Natural killer cell (primary cell): ENCODE measurements at regions of chr10 and their contacts with region 1.

Region 1: GRCh38 chr10:119199231-119199992 is 8.0 kb upstream of the GRK5 start:
- DNase-seq: peak in 1 of 2 donors; percentile 76
- ATAC-seq: peak; percentile 57 to 85 (median 57)
- H3K4me3 ChIP-seq: no peak overlapping the region
- H3K4me3 Mint-ChIP-seq: no peak overlapping the region
- H3K27ac ChIP-seq: no peak overlapping the region
- H3K27ac Mint-ChIP-seq: peak overlapping the region in 1 of 2 donors; percentile 29
- H3K4me1 ChIP-seq: no peaks in the 10 kb centered on the region
- H3K4me1 Mint-ChIP-seq: peaks cover 16 to 20% of the 10 kb centered on the region in 2 donors
- H3K27me3 ChIP-seq: no peaks in the 10 kb centered on the region
- H3K27me3 Mint-ChIP-seq: peaks cover 0 to 2% of the 10 kb centered on the region in 2 donors
- CTCF ChIP-seq: peak; percentile 33

Region 2: DNA sequence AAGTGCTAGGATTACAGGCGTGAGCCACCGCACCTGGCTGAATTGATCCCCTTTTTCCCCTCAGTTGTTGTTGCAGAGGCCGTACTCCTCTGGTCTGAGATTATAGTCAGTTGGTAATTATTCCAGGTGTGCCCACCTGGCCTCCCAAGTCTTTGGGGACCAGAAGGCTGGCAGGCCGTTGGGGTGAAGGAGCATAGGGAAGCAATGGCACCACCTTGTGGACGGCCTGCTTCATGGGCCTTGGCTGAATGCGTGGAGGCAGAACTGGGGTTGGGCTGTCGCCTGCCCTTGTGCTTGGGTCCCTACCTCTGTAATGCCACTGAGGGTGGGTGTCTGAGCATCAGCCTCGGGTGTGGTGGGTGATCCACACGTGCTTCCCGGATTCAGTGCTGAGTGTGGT is 217.4 kb after region 1 on chr10:
- intact Hi-C with region 1: loop called (anchors 1 kb)
- DNase-seq: peak; percentile 60 to 85
- ATAC-seq: peak; percentile 81 to 96 (median 90)
- H3K4me3 ChIP-seq: no peak overlapping the region
- H3K4me3 Mint-ChIP-seq: no peak overlapping the region
- H3K27ac ChIP-seq: no peak overlapping the region
- H3K27ac Mint-ChIP-seq: peak overlapping the region in 1 of 2 donors; percentile 64
- H3K4me1 ChIP-seq: no peaks in the 10 kb centered on the region
- H3K4me1 Mint-ChIP-seq: peaks cover 4 to 5% of the 10 kb centered on the region in 2 donors
- H3K27me3 ChIP-seq: no peaks in the 10 kb centered on the region
- H3K27me3 Mint-ChIP-seq: no peaks in the 10 kb centered on the region
- CTCF ChIP-seq: peak; percentile 54

Region 3: DNA sequence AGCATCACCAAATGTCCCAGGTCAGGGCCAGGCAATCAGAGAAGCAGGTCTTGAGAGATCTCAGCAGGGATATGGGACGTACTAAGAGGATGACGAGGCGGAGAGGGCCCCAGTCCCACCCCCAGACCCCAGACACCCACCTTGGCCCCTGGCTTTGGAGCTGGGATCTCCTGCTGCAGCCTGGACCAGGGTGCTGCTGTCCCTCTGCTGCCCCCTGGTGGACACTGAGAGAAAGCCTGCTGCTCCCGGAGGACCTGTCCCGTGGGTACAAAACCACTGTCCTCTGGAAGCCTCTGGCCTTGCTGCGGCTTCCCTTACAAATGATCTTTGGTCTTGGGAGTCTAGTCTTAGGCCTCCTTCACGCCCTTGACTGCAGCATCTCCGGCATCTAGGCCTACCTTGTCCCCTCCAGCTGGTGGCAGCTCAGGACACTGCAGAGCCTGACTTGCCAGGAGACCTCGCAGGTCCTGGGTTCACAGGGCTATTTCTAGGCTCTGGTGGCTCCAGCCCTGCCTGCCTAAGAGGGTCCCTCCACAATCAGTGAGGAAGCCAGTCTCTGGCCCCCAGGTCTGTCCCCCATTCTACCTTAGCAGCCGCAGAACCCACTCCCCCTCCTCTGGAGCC is 246.0 kb after region 1 on chr10:
- intact Hi-C with region 1: loop called (anchors 2 kb)
- DNase-seq: peak; percentile 80 to 93
- ATAC-seq: peak; percentile 77 to 92 (median 90)
- H3K4me3 ChIP-seq: no peak overlapping the region
- H3K4me3 Mint-ChIP-seq: no peak overlapping the region
- H3K27ac ChIP-seq: no peak overlapping the region
- H3K27ac Mint-ChIP-seq: peak overlapping the region in 1 of 2 donors; percentile 21
- H3K4me1 ChIP-seq: peaks cover 4% of the 10 kb centered on the region
- H3K4me1 Mint-ChIP-seq: peaks cover 0 to 11% of the 10 kb centered on the region in 2 donors
- H3K27me3 ChIP-seq: no peaks in the 10 kb centered on the region
- H3K27me3 Mint-ChIP-seq: no peaks in the 10 kb centered on the region
- CTCF ChIP-seq: peak; percentile 89